Naive thymus-derived CD8-positive, alpha-beta T cell (primary cell): ENCODE measurements at regions of chr12 and their contacts with region 1.

Region 1: DNA sequence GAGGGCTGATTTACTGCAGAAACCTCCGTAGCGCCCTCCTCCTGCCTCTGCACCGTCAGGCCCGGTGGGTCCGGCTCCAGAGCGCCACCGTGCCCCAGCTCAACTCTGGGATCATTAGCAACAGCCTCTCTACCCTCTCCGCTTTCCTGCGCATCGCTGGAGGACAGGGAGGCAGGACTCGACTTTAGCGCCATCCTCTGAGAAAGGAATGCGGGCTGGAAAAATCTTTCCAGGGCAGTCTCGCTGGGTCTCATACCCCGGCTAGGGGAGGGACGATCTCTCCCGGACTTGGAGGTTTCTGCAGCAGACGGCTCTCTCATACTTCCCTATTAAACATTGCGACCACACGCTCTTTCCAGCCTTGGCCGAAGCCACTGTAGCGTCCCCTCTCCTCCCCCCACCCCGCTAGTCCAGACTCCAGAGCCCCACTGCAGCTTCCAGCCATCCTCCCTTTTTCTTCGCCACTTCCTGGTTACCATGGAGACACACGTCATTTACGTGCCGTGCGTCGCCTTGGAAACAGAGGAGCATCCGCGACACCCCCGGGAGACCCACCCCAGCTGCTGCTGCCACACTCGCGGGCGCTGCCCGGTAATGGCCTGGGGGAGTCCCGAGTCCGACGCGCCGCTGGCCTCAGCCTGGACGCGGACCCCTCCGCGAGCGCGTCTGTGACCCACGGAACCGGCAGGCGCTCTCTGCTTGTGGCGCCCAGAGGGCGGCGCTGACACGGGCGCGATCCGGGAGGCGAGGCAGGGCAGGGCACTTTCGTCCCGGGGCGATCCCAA is at the start of gene CCDC184:
- DNase-seq: peak; percentile 48 to 92 (median 80)
- ATAC-seq: peak; percentile 77 to 81
- H3K4me3 Mint-ChIP-seq: peak within 1 kb of the TSS; percentile 88 to 98 (median 96)
- H3K27ac Mint-ChIP-seq: peak within 1 kb of the TSS; percentile 72 to 98 (median 92)
- H3K4me1 Mint-ChIP-seq: peaks cover 8 to 23% (median 19%) of the 10 kb centered on the region in 4 donors
- H3K27me3 Mint-ChIP-seq: peaks cover 16 to 57% (median 36%) of the 10 kb centered on the region in 5 donors
- polyA plus RNA-seq, gene CCDC184: 0.11 to 0.13 TPM in 2 of 3 donors, not detected in the other

Region 2: GRCh38 chr12:48023399-48023785 is 159.9 kb before region 1 on chr12:
- POLR2A ChIA-PET with region 1: no interaction called
- DNase-seq: no peak
- ATAC-seq: no peak
- H3K4me3 Mint-ChIP-seq: no peak overlapping the region
- H3K27ac Mint-ChIP-seq: no peak overlapping the region
- H3K4me1 Mint-ChIP-seq: no peaks in the 10 kb centered on the region
- H3K27me3 Mint-ChIP-seq: peaks cover 8 to 28% (median 21%) of the 10 kb centered on the region in 5 donors

Region 3: GRCh38 chr12:48157018-48157888 is 26.0 kb before region 1 on chr12 and contains the start of gene ASB8:
- POLR2A ChIA-PET with region 1: interaction called, 12 read pairs
- DNase-seq: peak; percentile 97 to 99 (median 99)
- ATAC-seq: peak; percentile 93
- H3K4me3 Mint-ChIP-seq: peak within 1 kb of the TSS; percentile 93 to 99 (median 96)
- H3K27ac Mint-ChIP-seq: peak within 1 kb of the TSS; percentile 98 to 100 (median 99)
- H3K4me1 Mint-ChIP-seq: peaks cover 24 to 56% (median 54%) of the 10 kb centered on the region in 4 donors
- H3K27me3 Mint-ChIP-seq: peaks cover 0 to 2% (median 0%) of the 10 kb centered on the region in 5 donors
- polyA plus RNA-seq, gene ASB8: 61.2 to 75.6 (median 64.4) TPM